ENCODE measurements at regions of chr1 and their contacts with region 1.

Region 1: GRCh38 chr1:222266223-222267196 is 281.4 kb downstream of the HHIPL2 start:
- DNase-seq: no peak
- H3K4me3 ChIP-seq: no peak overlapping the region
- H3K27ac ChIP-seq: no peak overlapping the region
- H3K4me1 ChIP-seq: no peaks in the 10 kb centered on the region
- H3K27me3 ChIP-seq: no peaks in the 10 kb centered on the region
- CTCF ChIP-seq: no peak

Region 2: GRCh38 chr1:222195857-222196256 is 70.7 kb before region 1 on chr1:
- intact Hi-C with region 1: loop called (anchors 2 kb)
- DNase-seq: no peak
- H3K4me3 ChIP-seq: no peak overlapping the region
- H3K27ac ChIP-seq: no peak overlapping the region
- H3K4me1 ChIP-seq: no peaks in the 10 kb centered on the region
- H3K27me3 ChIP-seq: no peaks in the 10 kb centered on the region
- CTCF ChIP-seq: no peak

Measured in tibial artery (tissue), 4 donors.